BJ (cell line): ENCODE measurements at regions of chr14 and their contacts with region 1.

Region 1: DNA sequence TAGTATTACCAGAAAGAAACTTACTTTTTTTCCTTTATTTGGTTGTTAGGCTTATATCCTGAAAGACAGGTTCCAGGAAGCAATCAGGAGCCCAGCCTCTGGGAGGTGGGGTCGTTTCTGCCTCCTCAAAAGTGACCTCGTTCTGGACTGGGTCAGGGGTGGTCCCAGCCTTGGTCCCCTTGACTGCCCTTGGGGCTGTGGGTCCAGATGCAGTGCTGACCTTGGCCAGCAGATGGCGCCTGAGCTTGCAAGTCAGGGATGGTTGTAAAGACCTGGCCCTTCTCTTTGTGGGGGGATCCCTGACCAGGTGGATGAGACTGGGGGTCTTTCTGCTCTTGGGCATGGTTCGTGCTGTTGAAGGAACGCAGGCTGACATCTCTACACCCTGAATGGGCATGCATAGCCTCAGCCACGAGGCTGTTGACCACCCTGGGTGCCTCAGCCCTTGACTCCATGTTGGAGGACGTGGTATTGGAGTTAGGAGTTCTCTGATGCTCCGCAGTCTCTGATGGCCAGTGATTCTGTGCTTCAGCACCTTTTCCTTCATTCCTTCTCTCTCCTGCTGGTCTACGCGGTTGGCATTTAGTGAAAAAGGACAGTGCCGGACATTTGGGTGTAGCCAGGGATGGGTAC is 62.4 kb downstream of the ADCK1 start:
- DNase-seq: no peak
- H3K4me3 ChIP-seq: no peak overlapping the region
- H3K27me3 ChIP-seq: no peaks in the 10 kb centered on the region
- CTCF ChIP-seq: peak; percentile 98

Region 2: DNA sequence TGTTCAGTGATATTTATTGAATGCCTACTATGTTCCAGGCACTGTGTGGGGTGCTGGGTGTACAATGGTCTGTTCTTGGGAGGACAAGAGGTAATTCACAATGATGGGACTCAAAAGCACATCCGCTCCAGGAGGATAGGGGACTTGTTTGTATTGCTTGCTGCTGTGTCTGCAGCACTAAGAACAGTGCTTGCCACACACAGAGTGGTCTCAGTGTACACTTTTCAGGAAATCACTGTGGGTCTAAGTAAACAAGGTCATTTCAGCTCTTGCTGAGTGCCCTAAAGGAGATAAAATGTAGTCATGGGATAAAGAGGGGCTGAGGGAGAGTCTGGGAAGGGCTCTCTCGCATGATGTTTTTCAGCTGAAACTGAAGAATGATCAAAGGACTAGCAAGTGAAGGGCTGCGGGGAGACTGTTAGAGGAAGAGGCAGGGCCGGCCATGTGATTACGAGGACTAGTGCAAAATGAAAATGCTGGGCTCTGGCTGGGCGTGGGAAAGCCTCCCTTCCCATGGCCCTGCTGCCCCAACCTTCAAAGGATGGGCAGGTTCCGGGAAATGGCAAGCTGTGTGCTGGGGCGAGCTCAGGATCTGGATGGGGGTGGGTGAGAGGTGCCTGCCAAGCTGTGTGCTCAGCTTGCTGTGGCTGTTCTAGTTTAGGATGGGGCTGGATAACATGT is 23.3 kb before region 1 on chr14:
- CTCF ChIA-PET with region 1: interaction called, 22 read pairs
- POLR2A ChIA-PET with region 1: no interaction called
- DNase-seq: no peak
- H3K4me3 ChIP-seq: no peak overlapping the region
- H3K27me3 ChIP-seq: no peaks in the 10 kb centered on the region
- CTCF ChIP-seq: no peak

Region 3: GRCh38 chr14:77849711-77850110 is 12.6 kb before region 1 on chr14:
- CTCF ChIA-PET with region 1: interaction called, 22 read pairs
- POLR2A ChIA-PET with region 1: no interaction called
- DNase-seq: no peak
- H3K4me3 ChIP-seq: no peak overlapping the region
- H3K27me3 ChIP-seq: no peaks in the 10 kb centered on the region
- CTCF ChIP-seq: no peak

Region 4: GRCh38 chr14:77882636-77883035 is 20.4 kb after region 1 on chr14:
- CTCF ChIA-PET with region 1: interaction called, 22 read pairs
- POLR2A ChIA-PET with region 1: no interaction called
- DNase-seq: no peak
- H3K4me3 ChIP-seq: no peak overlapping the region
- H3K27me3 ChIP-seq: no peaks in the 10 kb centered on the region
- CTCF ChIP-seq: no peak

Region 5: DNA sequence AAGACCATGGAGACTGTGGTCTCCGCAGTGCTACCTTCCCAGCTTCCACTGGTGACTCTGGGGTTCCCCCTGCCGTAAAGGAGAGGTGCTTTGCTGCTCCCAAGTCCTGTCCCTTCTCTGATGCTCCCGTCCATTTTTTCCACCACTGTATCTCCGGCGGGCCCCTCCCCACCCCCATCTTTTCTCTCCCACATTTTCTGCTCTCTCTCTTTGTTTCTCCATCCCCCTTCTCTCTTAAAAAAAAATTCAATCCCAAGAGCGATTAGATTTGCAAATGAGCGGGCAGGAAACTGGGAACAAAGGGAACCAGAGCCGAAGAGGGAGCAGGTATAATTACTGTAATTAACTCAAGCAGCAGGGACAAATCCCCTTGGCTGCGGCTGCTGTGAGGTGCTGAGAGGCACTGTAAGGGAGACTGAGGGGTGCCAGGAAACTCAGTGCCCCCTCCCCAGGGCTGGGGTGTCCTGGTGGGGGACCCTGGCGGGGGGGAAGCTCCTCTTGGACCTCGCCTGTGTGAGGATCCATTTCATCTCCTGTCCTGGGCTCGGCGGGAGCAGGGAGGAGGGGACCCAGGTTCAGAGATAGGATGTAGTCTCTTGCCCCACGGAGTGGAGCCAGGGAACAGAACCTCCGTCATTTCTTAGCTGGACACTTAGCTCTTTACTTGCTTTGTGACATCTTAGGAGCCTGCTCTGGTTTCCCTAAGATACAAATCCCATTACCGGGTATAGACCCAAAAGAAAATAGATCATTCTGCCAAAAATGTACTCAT is 167.5 kb after region 1 on chr14:
- CTCF ChIA-PET with region 1: interaction called, 11 read pairs
- POLR2A ChIA-PET with region 1: no interaction called
- DNase-seq: no peak
- H3K4me3 ChIP-seq: no peak overlapping the region
- H3K27me3 ChIP-seq: no peaks in the 10 kb centered on the region
- CTCF ChIP-seq: peak; percentile 24; the same call in 1 of the 2 replicates

Region 6: GRCh38 chr14:78566026-78566858 is 704.0 kb after region 1 on chr14:
- CTCF ChIA-PET with region 1: interaction called, 53 read pairs
- POLR2A ChIA-PET with region 1: no interaction called
- DNase-seq: peak; percentile 9
- H3K4me3 ChIP-seq: peak overlapping the region; percentile 29; the same call in 1 of the 2 replicates
- H3K27me3 ChIP-seq: no peaks in the 10 kb centered on the region
- CTCF ChIP-seq: peak; percentile 88

Region 7: DNA sequence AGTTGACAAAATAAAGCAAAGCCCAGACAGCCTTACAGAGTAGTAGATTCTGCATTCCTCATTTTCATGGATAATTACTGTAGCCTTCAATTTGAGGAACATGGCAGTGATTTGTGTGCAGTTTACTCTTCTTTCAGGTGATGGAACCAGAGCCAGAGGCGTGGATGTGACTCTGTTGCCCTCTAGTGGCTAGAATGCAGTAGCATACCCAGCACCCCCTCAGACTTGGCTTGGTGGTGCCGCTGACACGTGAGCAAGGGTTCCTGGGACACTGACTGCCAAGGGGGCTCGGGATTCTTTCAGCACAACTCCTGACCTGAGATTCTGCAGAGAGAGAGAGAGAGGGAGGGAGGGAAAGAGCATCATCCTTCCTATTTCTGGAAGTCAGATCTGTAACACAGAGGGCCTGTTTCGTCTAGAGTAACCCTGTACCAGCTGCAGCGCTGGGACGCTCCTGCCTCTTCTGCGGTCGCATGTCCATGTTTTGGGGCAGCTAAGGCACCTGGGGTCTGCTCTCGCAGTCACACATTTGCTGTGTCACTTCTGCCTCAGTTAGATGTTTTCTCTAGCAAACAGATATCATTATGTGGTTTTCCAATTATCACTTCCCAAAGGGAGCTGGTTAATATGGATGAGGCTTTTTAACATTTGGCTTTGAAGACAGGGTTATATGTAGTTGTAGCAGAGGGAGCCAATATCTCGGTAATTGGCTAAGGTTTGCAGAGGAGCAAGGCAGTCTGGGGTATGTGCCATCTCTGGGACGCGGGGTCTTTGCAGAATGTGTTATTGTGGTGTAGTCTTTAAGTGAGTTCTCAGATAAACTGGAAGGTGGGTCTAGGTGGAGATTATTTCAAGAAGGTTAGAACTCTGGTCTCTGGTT is 736.0 kb after region 1 on chr14:
- CTCF ChIA-PET with region 1: interaction called, 16 read pairs
- POLR2A ChIA-PET with region 1: no interaction called
- DNase-seq: no peak
- H3K4me3 ChIP-seq: no peak overlapping the region
- H3K27me3 ChIP-seq: peaks cover 1% of the 10 kb centered on the region; the same call in 1 of the 2 replicates
- CTCF ChIP-seq: peak; percentile 92